ENCODE measurements at regions of chr3 and their contacts with region 1.

Region 1: DNA sequence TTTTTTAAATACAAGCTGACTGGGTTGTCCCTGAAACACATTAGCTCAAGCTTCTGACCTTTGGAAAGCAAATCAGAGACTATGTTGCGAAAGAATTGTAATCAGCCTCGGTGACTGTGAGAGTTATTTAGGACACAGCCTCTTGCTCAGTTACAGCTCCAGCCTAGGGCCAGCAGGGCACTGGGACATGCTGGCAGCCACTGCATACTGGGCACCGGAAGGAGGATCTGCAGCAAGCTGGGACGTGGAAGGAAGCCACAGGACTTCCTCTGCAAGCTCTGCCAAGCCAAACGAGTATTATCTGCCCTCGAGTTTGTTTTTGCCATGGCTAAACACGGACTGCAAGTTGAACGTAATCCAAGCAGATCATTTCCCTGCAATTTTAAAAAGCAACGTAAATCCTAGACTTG is 24.4 kb upstream of the COPG1 start:
- DNase-seq: peak; percentile 75
- H3K4me3 ChIP-seq: peak overlapping the region; percentile 1 to 3
- H3K27ac ChIP-seq: peak overlapping the region; percentile 70 to 72
- H3K4me1 ChIP-seq: peaks cover 9% of the 10 kb centered on the region
- H3K27me3 ChIP-seq: no peaks in the 10 kb centered on the region
- CTCF ChIP-seq: no peak
- POLR2A ChIP-seq: no peak

Region 2: GRCh38 chr3:129183569-129184395 is 41.2 kb before region 1 on chr3 and contains the start of gene CNBP:
- intact Hi-C with region 1: loop called (anchors 5 kb)
- DNase-seq: peak; percentile 92
- H3K4me3 ChIP-seq: peak within 1 kb of the TSS; percentile 74 to 98
- H3K27ac ChIP-seq: peak within 1 kb of the TSS; percentile 96 to 98
- H3K4me1 ChIP-seq: peaks cover 18% of the 10 kb centered on the region
- H3K27me3 ChIP-seq: no peaks in the 10 kb centered on the region
- CTCF ChIP-seq: peak in 1 of 4 experiments; percentile 25
- POLR2A ChIP-seq: peak; percentile 98
- total RNA-seq, gene CNBP: 339 to 523 TPM

Measured in prostate gland (tissue), 2 donors.